ENCODE measurements at regions of chr2 and their contacts with region 1.

Region 1: DNA sequence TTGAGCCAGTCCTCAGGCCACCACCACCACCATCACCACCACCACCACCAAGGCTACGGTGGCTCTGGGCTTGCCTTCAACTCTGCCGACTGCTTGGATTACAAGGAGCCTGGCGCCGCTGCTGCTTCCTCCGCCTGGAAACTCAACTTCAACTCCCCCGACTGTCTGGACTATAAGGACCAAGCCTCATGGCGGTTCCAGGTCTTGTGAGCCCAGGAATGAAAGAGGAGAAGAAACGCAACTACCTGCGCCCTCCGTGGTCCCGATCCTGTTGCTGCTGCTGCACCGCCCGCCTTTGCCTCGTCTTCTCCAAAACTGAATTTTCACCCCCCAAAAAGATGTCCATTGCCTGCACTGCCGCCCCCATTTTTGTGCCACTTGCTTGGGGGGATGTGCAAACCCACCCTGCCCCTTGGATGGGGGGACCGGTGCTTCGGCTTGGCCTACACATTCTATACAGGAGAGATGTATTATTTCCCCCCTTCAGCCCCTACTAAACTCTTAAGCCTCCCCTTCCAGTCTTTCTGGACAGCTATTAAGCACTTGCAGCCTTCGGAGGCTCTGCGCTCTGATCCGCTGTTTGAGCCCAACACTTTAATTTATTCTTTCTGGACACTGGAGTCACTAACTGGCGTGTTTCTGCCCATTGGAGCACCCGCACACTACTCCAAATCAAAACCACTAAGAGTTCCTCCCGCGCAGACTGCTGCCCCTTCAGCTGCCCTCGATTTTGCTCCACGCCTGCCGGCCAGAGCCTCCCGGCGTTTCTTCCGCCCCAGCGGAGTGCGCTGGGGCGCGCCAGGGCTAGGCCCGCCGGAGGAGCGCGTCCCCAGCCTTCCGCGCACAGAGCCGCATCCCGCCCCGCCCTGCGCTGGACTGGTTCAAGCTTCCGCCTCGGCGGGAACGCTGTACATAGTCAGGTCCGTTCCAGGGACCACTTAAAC is 5.7 kb downstream of the OTX1 start:
- DNase-seq: peak; percentile 51 to 78
- ATAC-seq: no peak
- H3K4me3 ChIP-seq: no peak overlapping the region
- H3K27ac ChIP-seq: no peak overlapping the region
- H3K4me1 ChIP-seq: no peaks in the 10 kb centered on the region
- H3K27me3 ChIP-seq: peaks cover 0 to 6% of the 10 kb centered on the region in 2 donors

Region 2: DNA sequence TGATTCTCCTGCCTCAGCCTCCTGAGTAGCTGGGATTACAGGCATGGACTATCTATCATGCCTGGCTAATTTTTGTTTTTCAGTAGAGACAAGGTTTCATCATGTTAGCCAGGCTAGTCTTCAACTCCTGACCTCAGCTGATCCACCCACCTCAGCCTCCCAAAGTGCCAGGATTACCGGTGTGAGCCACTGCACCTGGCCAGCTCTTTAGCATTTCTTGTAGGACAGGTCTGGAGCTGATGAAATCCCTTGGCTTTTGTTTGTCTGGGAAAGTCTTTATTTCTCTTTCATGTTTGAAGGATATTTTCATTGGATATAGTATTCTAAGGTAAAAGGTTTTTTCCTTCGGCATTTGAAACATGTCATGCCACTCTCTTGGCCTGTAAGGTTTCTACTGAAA is 942.7 kb after region 1 on chr2:
- intact Hi-C with region 1: loop called in 1 of 2 experiments (anchors 5 kb)
- DNase-seq: no peak
- ATAC-seq: no peak
- H3K4me3 ChIP-seq: no peak overlapping the region
- H3K27ac ChIP-seq: no peak overlapping the region
- H3K4me1 ChIP-seq: no peaks in the 10 kb centered on the region
- H3K27me3 ChIP-seq: no peaks in the 10 kb centered on the region